Head of caudate nucleus (tissue), 42 donors: ENCODE measurements at regions of chrX and their contacts with region 1.

Region 1: DNA sequence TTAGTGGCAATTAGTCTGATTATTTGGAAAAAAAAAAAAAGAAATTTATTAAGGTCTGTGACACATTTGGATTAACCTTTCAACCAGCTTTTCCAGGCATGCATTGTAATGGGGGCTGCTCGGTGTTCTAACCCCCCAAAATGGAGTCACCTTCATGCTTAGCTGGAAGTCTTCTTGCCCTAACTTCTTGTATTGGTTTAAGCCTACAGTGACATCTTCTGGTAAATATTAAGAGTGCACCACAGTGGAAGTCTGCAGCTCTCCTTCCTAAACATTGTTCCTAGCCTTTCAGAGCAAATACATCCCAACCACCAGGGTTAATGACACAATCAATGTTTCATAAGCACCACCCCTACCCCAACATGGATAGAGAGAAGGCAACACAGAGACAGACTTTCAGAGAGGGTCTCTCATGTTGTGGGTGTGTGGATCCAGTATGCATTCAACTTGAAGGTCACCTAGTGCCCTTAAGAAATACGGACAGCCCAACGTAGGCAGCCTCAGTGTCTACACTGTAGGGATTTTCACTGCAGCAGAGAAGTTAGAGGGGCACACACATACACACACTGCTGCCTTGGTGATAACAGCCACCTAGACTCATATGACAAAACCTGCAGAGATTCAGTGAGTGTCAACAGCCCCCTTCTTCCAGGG is 142.9 kb upstream of the MBNL3 start:
- DNase-seq: peak in 2 of 42 donors; percentile 3

Region 2: GRCh38 chrX:131845201-131845600 is 786.5 kb before region 1 on chrX:
- intact Hi-C with region 1: loop called (anchors 5 kb)
- DNase-seq: no peak

Region 3: GRCh38 chrX:132539611-132540010 is 92.1 kb before region 1 on chrX:
- intact Hi-C with region 1: no loop called
- DNase-seq: no peak

Region 4: GRCh38 chrX:132664269-132664668 is 32.6 kb after region 1 on chrX:
- intact Hi-C with region 1: no loop called
- DNase-seq: no peak